ENCODE measurements at regions of chr5 and their contacts with region 1.

Region 1: DNA sequence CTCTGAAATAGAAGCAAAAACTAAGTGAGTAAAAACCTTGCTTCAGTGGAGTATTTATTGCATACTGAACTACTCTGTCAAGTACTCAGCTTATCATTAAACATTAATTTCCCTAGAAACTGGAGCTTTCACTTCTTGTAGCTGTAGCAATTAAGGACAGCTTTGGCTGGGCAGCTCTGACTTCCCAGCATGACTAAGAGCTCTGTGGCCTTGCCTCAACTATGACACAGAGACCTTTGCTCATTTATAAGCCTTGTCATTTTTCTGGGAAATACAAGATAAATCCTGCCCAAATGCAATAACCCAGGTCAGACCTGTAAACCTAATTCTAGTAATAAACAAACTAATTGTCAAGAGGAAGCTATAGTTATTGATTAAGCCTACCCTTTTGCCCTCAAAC is 65.4 kb upstream of the STK32A start:
- DNase-seq: peak in 1 of 2 experiments; percentile 65
- H3K4me3 ChIP-seq: no peak overlapping the region
- H3K4me3 Mint-ChIP-seq: peak overlapping the region; percentile 18
- H3K27ac Mint-ChIP-seq: peak overlapping the region; percentile 97
- H3K4me1 ChIP-seq: peaks cover 69% of the 10 kb centered on the region
- H3K4me1 Mint-ChIP-seq: peaks cover 59% of the 10 kb centered on the region
- H3K27me3 ChIP-seq: no peaks in the 10 kb centered on the region
- H3K27me3 Mint-ChIP-seq: no peaks in the 10 kb centered on the region
- CTCF ChIP-seq: no peak

Region 2: GRCh38 chr5:147044572-147045273 is 124.7 kb before region 1 on chr5:
- CTCF ChIA-PET with region 1: no interaction called
- POLR2A ChIA-PET with region 1: no interaction called
- intact Hi-C with region 1: loop called (anchors 5 kb)
- DNase-seq: no peak
- H3K4me3 ChIP-seq: no peak overlapping the region
- H3K4me3 Mint-ChIP-seq: peak overlapping the region; percentile 76
- H3K27ac Mint-ChIP-seq: no peak overlapping the region
- H3K4me1 ChIP-seq: peaks cover 22% of the 10 kb centered on the region
- H3K4me1 Mint-ChIP-seq: peaks cover 39% of the 10 kb centered on the region
- H3K27me3 ChIP-seq: no peaks in the 10 kb centered on the region
- H3K27me3 Mint-ChIP-seq: no peaks in the 10 kb centered on the region
- CTCF ChIP-seq: no peak

Region 3: GRCh38 chr5:147098233-147098790 is 71.1 kb before region 1 on chr5:
- CTCF ChIA-PET with region 1: no interaction called
- POLR2A ChIA-PET with region 1: no interaction called
- intact Hi-C with region 1: loop called (anchors 1 kb)
- DNase-seq: peak in 1 of 2 experiments; percentile 36
- H3K4me3 ChIP-seq: no peak overlapping the region
- H3K4me3 Mint-ChIP-seq: no peak overlapping the region
- H3K27ac Mint-ChIP-seq: no peak overlapping the region
- H3K4me1 ChIP-seq: peaks cover 13% of the 10 kb centered on the region
- H3K4me1 Mint-ChIP-seq: peaks cover 24% of the 10 kb centered on the region
- H3K27me3 ChIP-seq: no peaks in the 10 kb centered on the region
- H3K27me3 Mint-ChIP-seq: no peaks in the 10 kb centered on the region
- CTCF ChIP-seq: peak; percentile 46 to 56

Region 4: GRCh38 chr5:147140558-147140957 is 28.8 kb before region 1 on chr5:
- CTCF ChIA-PET with region 1: no interaction called
- POLR2A ChIA-PET with region 1: no interaction called
- intact Hi-C with region 1: loop called (anchors 1 kb)
- DNase-seq: peak; percentile 46 to 47
- H3K4me3 ChIP-seq: no peak overlapping the region
- H3K4me3 Mint-ChIP-seq: peak overlapping the region; percentile 5
- H3K27ac Mint-ChIP-seq: peak overlapping the region; percentile 68
- H3K4me1 ChIP-seq: peaks cover 23% of the 10 kb centered on the region
- H3K4me1 Mint-ChIP-seq: peaks cover 23% of the 10 kb centered on the region
- H3K27me3 ChIP-seq: no peaks in the 10 kb centered on the region
- H3K27me3 Mint-ChIP-seq: no peaks in the 10 kb centered on the region
- CTCF ChIP-seq: no peak